Ovary (tissue), 10 donors: ENCODE measurements at regions of chr13 and their contacts with region 1.

Region 1: GRCh38 chr13:30465585-30466357 is at the start of gene HMGB1:
- DNase-seq: peak; percentile 97 to 98 (median 97)
- H3K4me3 ChIP-seq: peak within 1 kb of the TSS; percentile 93
- H3K27ac ChIP-seq: peak within 1 kb of the TSS; percentile 99 to 100
- H3K4me1 ChIP-seq: peaks cover 1% of the 10 kb centered on the region
- H3K27me3 ChIP-seq: no peaks in the 10 kb centered on the region
- CTCF ChIP-seq: no peak
- EP300 ChIP-seq: no peak
- POLR2A ChIP-seq: peak; percentile 98
- total RNA-seq, gene HMGB1: 163 to 283 (median 240) TPM

Region 2: DNA sequence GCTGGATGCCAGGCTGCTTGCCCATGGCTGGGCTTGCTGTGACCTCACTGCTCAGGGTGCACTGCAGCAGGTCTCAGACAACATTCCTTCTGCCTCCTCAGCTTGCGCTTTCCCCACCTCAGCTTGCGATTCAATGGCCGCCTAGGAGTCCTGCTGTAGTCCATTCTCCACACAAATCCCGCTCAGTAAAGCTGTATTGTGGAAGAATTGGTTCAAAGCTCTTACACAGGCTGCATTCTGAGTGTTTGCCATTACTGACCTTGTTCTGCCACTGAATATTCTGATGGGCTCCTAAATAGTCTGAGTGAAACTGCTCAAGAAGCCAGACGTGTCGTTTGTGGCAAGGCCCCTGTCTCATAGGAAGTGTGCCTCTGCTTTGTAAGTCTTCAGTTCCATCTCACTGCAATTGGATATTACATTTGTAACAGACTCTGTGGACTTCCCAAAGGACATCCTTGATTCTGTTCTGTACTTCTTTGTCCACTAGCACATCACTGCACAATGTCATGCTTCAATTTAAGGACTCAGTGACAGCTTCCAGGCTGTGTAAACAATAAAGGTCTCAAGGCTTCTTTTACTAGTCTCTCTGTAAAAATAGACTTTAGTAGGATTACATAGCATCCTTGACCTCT is 208.2 kb before region 1 on chr13:
- intact Hi-C with region 1: loop called in 1 of 4 experiments (anchors 10 kb)
- DNase-seq: no peak
- H3K4me3 ChIP-seq: no peak overlapping the region
- H3K27ac ChIP-seq: no peak overlapping the region
- H3K4me1 ChIP-seq: no peaks in the 10 kb centered on the region
- H3K27me3 ChIP-seq: no peaks in the 10 kb centered on the region
- CTCF ChIP-seq: no peak
- EP300 ChIP-seq: no peak
- POLR2A ChIP-seq: no peak